ENCODE measurements at regions of chr1 and their contacts with region 1.

Region 1: DNA sequence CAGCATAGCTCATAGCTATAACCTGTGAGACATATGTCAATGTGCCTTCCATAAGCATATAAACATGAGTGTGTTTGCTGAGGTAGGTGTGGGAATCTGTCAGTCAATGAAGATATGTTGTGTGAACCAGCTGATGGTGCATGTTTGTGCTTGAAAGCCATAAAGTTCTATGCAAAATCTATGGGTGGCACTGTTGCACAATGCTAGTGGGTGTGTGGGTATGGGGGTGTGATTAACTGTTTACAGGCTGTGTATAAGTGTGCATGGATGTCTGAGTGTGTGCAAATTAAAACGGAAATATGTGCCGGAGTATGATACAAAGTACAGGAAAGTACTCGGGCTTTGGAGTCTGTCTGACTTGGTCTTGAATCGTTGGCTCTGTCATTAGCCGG is 1.0 kb upstream of the ATP2B4 start:
- DNase-seq: no peak
- H3K4me3 ChIP-seq: peak overlapping the region in 1 of 4 donors; percentile 77
- H3K27ac ChIP-seq: peak overlapping the region; percentile 87 to 96 (median 90)
- H3K4me1 ChIP-seq: peaks cover 27 to 61% (median 42%) of the 10 kb centered on the region in 3 donors
- H3K27me3 ChIP-seq: no peaks in the 10 kb centered on the region
- CTCF ChIP-seq: peak in 5 of 6 experiments; percentile 34 to 52 (median 39)
- POLR2A ChIP-seq: no peak

Region 2: GRCh38 chr1:203439131-203439730 is 186.4 kb before region 1 on chr1:
- intact Hi-C with region 1: no loop called
- DNase-seq: no peak
- H3K4me3 ChIP-seq: no peak overlapping the region
- H3K27ac ChIP-seq: no peak overlapping the region
- H3K4me1 ChIP-seq: peaks cover 0 to 27% (median 9%) of the 10 kb centered on the region in 3 donors
- H3K27me3 ChIP-seq: peaks cover 0 to 6% (median 0%) of the 10 kb centered on the region in 4 donors
- CTCF ChIP-seq: no peak
- POLR2A ChIP-seq: no peak

Region 3: GRCh38 chr1:203504397-203505250 is 121.0 kb before region 1 on chr1:
- intact Hi-C with region 1: loop called (anchors 10 kb)
- DNase-seq: peak; percentile 23
- H3K4me3 ChIP-seq: no peak overlapping the region
- H3K27ac ChIP-seq: no peak overlapping the region
- H3K4me1 ChIP-seq: peaks cover 10 to 42% (median 20%) of the 10 kb centered on the region in 3 donors
- H3K27me3 ChIP-seq: peaks cover 0 to 4% (median 0%) of the 10 kb centered on the region in 4 donors
- CTCF ChIP-seq: peak; percentile 73 to 92 (median 88)
- POLR2A ChIP-seq: no peak

Region 4: GRCh38 chr1:203695116-203695515 is 69.5 kb after region 1 on chr1:
- intact Hi-C with region 1: loop called (anchors 5 kb)
- DNase-seq: no peak
- H3K4me3 ChIP-seq: no peak overlapping the region
- H3K27ac ChIP-seq: peak overlapping the region; percentile 9 to 96 (median 91)
- H3K4me1 ChIP-seq: peaks cover 25 to 76% (median 44%) of the 10 kb centered on the region in 3 donors
- H3K27me3 ChIP-seq: no peaks in the 10 kb centered on the region
- CTCF ChIP-seq: no peak
- POLR2A ChIP-seq: no peak

Region 5: DNA sequence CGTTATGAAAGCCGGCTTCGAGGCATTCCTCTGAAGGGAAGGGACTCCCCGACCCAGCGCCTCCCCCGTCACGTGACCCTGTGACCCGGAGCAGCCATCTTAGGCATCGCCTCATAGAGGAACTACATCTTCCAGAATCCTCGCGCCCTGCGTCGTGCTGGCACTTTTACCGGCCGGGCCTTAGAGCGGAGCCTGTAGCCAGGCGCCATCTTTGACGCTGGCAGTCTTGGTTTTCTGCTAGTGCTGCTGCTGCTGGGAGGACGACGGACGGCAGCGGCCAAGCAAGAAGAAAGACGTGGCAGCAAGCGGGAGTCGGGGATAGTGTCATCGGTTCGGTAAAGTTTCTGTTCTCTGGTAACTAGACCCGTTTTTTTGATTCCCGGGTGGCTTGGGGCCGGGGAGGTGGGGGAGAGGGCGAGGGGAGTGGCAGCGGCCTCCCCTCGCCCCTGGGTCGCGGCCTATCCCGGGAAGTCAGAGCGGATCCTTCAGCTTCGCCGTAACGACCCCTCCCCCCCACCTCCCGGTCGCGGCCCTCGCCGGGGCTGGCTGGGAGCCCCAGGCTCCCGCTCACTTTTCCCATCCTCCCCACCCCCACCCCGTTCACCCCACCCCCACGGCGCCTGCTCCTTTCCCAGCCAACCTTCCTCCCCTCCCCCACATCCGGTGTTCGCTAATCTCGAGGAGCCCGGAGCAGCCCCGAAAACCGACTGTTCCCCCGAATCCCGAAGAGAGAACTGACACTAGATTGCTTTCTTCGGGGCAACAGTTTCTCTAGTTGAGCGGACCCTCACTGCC is 170.0 kb after region 1 on chr1 and contains the starts of genes ZBED6 and ZC3H11A:
- intact Hi-C with region 1: loop called (anchors 10 kb)
- DNase-seq: peak; percentile 98
- H3K4me3 ChIP-seq: peak within 1 kb of the TSS; percentile 73 to 91 (median 87)
- H3K27ac ChIP-seq: peak within 1 kb of the TSS; percentile 96 to 99 (median 98)
- H3K4me1 ChIP-seq: peaks cover 30 to 51% (median 33%) of the 10 kb centered on the region in 3 donors
- H3K27me3 ChIP-seq: no peaks in the 10 kb centered on the region
- CTCF ChIP-seq: no peak
- POLR2A ChIP-seq: peak in 3 of 4 donors; percentile 52 to 77 (median 67)
- total RNA-seq, gene ZBED6: 7.2 to 18.7 (median 13.8) TPM
- total RNA-seq, gene ZC3H11A: 55.5 to 97.8 (median 72.8) TPM

Region 6: DNA sequence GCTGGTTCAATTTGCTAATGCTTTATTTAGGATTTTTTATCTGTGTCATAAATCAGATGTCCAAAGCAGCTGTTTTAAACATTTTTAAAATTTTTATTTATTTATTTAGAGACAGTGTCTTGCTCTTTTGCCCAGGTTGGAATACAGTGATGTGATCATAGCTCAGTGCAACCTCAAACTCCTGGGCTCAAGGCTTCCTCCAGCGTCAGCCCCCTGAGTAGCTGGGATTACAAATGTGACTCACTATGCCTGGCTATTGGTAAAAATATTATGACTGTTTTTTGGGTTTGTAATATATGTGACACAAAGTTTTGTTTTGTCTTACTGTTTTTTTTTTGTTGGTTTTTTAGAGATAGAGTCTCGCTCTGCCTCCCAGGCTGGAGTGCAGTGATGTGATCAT is 181.6 kb after region 1 on chr1:
- intact Hi-C with region 1: no loop called
- DNase-seq: no peak
- H3K4me3 ChIP-seq: no peak overlapping the region
- H3K27ac ChIP-seq: no peak overlapping the region
- H3K4me1 ChIP-seq: peaks cover 0 to 29% (median under 1%) of the 10 kb centered on the region in 3 donors
- H3K27me3 ChIP-seq: no peaks in the 10 kb centered on the region
- CTCF ChIP-seq: no peak
- POLR2A ChIP-seq: no peak